ENCODE measurements at regions of chr5 and their contacts with region 1.

Region 1: GRCh38 chr5:43389679-43390329 is 22.4 kb downstream of the CCL28 start:
- DNase-seq: peak; percentile 67
- ATAC-seq: peak; percentile 92
- H3K4me3 Mint-ChIP-seq: no peak overlapping the region
- H3K27ac Mint-ChIP-seq: no peak overlapping the region
- H3K4me1 Mint-ChIP-seq: peaks cover 24% of the 10 kb centered on the region
- H3K27me3 Mint-ChIP-seq: no peaks in the 10 kb centered on the region
- CTCF ChIP-seq: peak; percentile 88

Region 2: GRCh38 chr5:43073597-43074546 is 315.9 kb before region 1 on chr5:
- CTCF ChIA-PET with region 1: interaction called, 7 read pairs
- POLR2A ChIA-PET with region 1: no interaction called
- intact Hi-C with region 1: loop called (anchors 10 kb)
- DNase-seq: peak; percentile 63
- ATAC-seq: peak; percentile 92
- H3K4me3 Mint-ChIP-seq: no peak overlapping the region
- H3K27ac Mint-ChIP-seq: peak overlapping the region; percentile 59
- H3K4me1 Mint-ChIP-seq: peaks cover 36% of the 10 kb centered on the region
- H3K27me3 Mint-ChIP-seq: no peaks in the 10 kb centered on the region
- CTCF ChIP-seq: peak; percentile 86

Region 3: DNA sequence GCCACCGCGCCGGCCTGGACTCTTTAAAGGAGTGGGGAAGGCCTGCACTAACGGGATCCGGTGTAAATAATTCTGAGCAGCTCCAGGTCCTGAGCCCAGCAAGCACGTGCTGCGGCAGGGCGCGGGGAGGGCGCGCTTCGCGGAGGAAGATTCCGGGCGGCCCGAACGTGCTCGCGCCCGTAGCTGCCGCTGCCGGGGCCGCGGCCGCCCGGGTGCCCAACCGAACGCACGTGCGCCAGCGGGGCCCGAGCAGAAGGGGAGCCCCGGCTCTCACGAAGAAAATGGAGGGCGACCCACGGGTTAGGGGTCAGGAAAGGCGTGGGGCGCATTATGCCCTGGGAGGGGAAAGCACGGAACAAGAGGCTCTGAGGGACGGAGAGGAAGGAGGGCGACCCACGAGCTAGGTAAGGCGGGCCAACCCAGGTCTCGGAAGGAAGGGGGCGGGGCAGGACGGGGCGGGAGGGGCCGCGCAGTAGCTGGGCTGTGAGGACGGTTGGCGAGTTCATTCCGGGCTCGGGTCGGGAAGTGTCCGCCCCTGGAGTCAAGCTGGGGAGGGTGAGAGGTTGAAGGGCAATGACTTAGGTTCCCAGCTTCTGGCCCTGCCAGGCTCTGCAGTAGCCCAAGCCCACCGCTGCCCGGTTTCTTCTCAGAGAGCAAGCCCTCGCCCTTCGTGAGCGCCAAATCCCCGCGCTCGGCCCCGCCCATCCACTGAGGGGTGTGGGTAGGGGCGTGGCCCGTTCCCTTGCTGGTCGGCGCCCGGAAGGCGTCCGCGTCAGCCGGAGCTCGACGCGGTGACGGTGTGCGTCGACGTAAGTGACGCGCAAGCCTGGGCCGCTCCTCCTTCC is 268.9 kb before region 1 on chr5 and contains the start of gene ZNF131:
- CTCF ChIA-PET with region 1: interaction called, 16 read pairs
- POLR2A ChIA-PET with region 1: interaction called, 3 read pairs
- intact Hi-C with region 1: no loop called
- DNase-seq: peak; percentile 97
- ATAC-seq: peak; percentile 93
- H3K4me3 Mint-ChIP-seq: peak within 1 kb of the TSS; percentile 89
- H3K27ac Mint-ChIP-seq: peak within 1 kb of the TSS; percentile 96
- H3K4me1 Mint-ChIP-seq: peaks cover 32% of the 10 kb centered on the region
- H3K27me3 Mint-ChIP-seq: no peaks in the 10 kb centered on the region
- CTCF ChIP-seq: no peak
- total RNA-seq, gene ZNF131: 34.8 to 36.6 TPM

Region 4: DNA sequence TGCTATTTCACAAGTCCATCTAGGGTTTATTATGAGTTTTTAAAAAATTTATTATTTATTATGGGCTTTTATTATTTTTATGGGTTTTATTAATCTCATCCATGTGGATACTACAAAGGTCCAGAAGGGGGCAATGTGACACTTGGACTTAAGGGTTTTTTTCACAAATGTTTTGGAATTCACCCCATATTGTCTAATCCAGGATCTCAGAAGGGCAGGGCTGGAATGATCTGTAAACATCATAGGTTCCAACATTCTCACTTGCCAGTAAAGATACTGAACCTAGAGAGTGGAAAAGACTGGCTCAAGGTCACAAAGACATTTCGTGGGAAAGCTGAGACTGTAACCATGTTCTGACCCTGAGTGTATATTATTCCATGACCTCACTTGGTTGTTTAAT is 162.1 kb before region 1 on chr5:
- CTCF ChIA-PET with region 1: interaction called, 30 read pairs
- POLR2A ChIA-PET with region 1: no interaction called
- intact Hi-C with region 1: loop called (anchors 5 kb)
- DNase-seq: no peak
- ATAC-seq: no peak
- H3K4me3 Mint-ChIP-seq: no peak overlapping the region
- H3K27ac Mint-ChIP-seq: no peak overlapping the region
- H3K4me1 Mint-ChIP-seq: no peaks in the 10 kb centered on the region
- H3K27me3 Mint-ChIP-seq: no peaks in the 10 kb centered on the region
- CTCF ChIP-seq: peak; percentile 46

Region 5: DNA sequence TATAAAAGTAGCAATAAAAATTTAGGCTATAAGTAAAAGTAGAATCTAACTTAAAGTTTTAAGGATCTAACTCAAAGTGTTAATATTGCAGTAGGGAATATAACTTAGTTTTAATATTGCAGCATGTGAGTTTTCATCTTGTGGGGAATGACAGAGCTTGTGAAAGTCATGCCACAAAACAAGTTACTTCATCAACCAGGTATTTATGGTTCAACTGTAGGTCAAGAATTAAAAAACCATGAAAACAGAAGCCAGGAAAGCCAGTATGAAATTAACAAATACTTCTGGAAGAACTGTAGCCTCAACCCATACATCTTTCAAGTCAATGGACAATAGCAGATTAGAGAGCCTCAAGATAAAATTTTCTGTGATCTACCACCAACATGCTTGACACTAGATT is 95.6 kb before region 1 on chr5:
- CTCF ChIA-PET with region 1: interaction called, 16 read pairs
- POLR2A ChIA-PET with region 1: no interaction called
- intact Hi-C with region 1: no loop called
- DNase-seq: no peak
- ATAC-seq: no peak
- H3K4me3 Mint-ChIP-seq: no peak overlapping the region
- H3K27ac Mint-ChIP-seq: no peak overlapping the region
- H3K4me1 Mint-ChIP-seq: peaks cover 4% of the 10 kb centered on the region
- H3K27me3 Mint-ChIP-seq: no peaks in the 10 kb centered on the region
- CTCF ChIP-seq: no peak

Region 6: GRCh38 chr5:43313035-43313853 is 76.6 kb before region 1 on chr5 and contains the start of gene HMGCS1:
- CTCF ChIA-PET with region 1: interaction called, 36 read pairs
- POLR2A ChIA-PET with region 1: interaction called, 4 read pairs
- intact Hi-C with region 1: loop called (anchors 5 kb)
- DNase-seq: peak; percentile 99
- ATAC-seq: peak; percentile 90
- H3K4me3 Mint-ChIP-seq: peak within 1 kb of the TSS; percentile 98
- H3K27ac Mint-ChIP-seq: peak within 1 kb of the TSS; percentile 98
- H3K4me1 Mint-ChIP-seq: peaks cover 62% of the 10 kb centered on the region
- H3K27me3 Mint-ChIP-seq: no peaks in the 10 kb centered on the region
- CTCF ChIP-seq: no peak
- total RNA-seq, gene HMGCS1: 63.6 to 65.7 TPM

Region 7: DNA sequence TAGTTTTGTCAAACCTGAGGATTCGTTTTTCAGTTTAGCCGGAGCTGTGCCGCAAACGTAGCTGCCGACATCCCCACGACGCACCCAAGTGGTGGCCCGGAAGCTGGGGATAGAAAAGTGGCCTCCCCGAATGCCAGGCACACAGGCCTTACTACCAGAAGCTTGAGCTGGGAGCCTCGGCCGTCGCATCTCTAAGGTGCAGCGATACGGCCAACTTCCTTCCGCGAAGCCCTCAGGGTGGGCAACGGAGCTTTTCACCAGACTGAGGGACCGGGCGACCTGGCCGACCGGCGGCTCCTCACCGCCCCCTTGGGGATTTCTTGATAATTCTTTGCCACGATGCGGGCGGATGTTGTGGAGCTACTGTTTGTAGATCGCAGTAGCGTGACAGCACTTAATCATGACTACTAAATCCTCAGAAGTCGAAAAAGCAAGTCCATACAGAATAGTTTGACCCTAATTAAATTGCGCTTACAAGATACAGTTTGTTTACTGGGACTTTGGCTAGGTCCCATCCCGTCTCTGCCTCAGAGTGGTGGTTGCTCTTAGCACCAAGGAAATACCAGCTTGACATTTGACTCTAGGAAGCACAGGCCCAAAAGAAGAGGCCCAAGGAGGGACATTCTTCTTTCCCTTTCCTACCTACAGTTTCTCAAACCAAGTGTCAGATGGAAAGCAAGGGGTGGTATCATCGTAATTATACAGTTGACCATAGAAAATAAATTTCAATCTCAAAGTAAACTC is 94.5 kb after region 1 on chr5:
- CTCF ChIA-PET with region 1: interaction called, 30 read pairs
- POLR2A ChIA-PET with region 1: interaction called, 3 read pairs
- intact Hi-C with region 1: loop called (anchors 5 kb)
- DNase-seq: peak; percentile 93
- ATAC-seq: peak; percentile 71
- H3K4me3 Mint-ChIP-seq: peak overlapping the region; percentile 91
- H3K27ac Mint-ChIP-seq: peak overlapping the region; percentile 100
- H3K4me1 Mint-ChIP-seq: peaks cover 42% of the 10 kb centered on the region
- H3K27me3 Mint-ChIP-seq: no peaks in the 10 kb centered on the region
- CTCF ChIP-seq: peak; percentile 67

Region 8: GRCh38 chr5:43619380-43619779 is 229.6 kb after region 1 on chr5:
- CTCF ChIA-PET with region 1: no interaction called
- POLR2A ChIA-PET with region 1: no interaction called
- intact Hi-C with region 1: no loop called
- DNase-seq: no peak
- ATAC-seq: no peak
- H3K4me3 Mint-ChIP-seq: no peak overlapping the region
- H3K27ac Mint-ChIP-seq: no peak overlapping the region
- H3K4me1 Mint-ChIP-seq: no peaks in the 10 kb centered on the region
- H3K27me3 Mint-ChIP-seq: no peaks in the 10 kb centered on the region
- CTCF ChIP-seq: no peak

Region 9: GRCh38 chr5:43785198-43785597 is 395.4 kb after region 1 on chr5:
- CTCF ChIA-PET with region 1: no interaction called
- POLR2A ChIA-PET with region 1: no interaction called
- intact Hi-C with region 1: no loop called
- DNase-seq: no peak
- ATAC-seq: no peak
- H3K4me3 Mint-ChIP-seq: no peak overlapping the region
- H3K27ac Mint-ChIP-seq: no peak overlapping the region
- H3K4me1 Mint-ChIP-seq: no peaks in the 10 kb centered on the region
- H3K27me3 Mint-ChIP-seq: no peaks in the 10 kb centered on the region
- CTCF ChIP-seq: no peak